ENCODE measurements at regions of chr7 and their contacts with region 1.

Region 1: GRCh38 chr7:134875867-134876266 is 96.4 kb downstream of the CALD1 start:
- DNase-seq: no peak

Region 2: DNA sequence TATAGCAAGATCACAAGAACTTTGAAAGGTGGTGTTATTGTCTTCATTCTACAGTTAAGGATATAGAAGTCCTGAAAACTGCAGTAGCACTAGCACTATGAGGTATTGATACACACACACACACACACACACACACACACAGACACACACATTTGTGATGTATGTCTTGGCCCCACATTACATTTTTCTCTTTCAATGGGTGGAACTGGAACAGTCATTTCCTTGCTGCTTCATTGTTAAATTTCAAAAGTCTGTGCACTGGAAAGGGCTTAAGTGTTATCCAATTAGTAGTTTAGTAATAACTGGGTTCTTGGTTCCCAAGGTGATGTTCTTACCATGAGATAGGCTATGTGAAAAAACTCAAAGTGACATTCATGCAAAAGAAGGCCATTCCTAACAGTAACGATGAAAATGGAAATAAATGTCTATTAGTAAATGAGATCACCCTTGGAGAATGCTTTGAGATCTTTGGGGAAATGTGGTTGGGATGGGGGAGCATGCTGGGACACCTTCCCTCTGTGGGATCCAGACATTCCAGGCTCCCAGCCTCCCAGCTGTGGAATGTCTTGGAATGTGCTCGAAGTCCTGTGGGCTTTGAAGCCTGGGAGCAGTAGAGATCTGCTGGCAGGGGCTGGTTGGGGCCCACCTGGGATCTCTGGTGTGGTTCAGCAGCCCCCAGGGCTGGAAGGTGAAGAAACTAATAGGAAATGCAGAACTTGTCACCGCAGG is 133.8 kb before region 1 on chr7:
- in situ Hi-C with region 1: no loop called
- DNase-seq: no peak

Region 3: DNA sequence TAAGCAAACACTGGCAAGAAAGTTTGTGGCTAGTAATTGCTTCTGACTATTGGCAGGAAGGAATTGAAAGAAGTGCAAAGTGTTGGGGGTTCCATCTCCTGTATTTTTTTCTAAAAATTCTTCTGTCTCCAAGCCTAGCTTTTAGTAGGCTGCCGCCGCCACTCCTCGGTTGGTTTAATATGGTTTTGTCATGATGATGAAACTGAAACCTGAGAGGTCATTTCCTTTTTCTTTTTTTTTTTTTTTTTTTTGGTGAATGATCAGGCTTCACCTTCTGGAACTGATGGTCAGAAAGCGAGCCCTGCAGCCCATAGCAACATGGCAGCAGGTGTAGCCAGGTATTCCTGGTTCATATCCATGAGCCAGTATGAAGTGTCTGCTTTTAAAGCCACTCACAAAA is 35.1 kb after region 1 on chr7:
- in situ Hi-C with region 1: loop called (anchors 5 kb)
- DNase-seq: no peak

Region 4: DNA sequence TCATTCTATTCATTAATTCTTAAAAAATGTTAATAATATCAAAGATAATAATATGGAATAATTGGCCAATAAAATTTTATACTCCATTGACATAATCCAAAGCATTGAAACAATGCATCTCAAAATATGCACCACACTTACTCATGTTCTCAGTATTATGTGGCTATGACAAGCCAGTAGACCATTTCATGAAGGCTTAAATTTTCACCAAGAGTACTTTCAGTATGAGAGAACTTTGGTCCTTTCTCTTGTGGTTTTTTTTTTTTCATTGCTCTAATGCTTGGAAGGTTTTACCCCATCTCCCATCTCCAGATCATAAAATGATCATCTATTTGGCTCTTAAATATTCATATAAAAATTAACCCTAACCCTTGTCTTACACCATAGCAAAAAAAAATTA is 226.5 kb after region 1 on chr7:
- in situ Hi-C with region 1: no loop called
- DNase-seq: no peak